CD8-positive, alpha-beta T cell (primary cell): ENCODE measurements at regions of chr6 and their contacts with region 1.

Region 1: DNA sequence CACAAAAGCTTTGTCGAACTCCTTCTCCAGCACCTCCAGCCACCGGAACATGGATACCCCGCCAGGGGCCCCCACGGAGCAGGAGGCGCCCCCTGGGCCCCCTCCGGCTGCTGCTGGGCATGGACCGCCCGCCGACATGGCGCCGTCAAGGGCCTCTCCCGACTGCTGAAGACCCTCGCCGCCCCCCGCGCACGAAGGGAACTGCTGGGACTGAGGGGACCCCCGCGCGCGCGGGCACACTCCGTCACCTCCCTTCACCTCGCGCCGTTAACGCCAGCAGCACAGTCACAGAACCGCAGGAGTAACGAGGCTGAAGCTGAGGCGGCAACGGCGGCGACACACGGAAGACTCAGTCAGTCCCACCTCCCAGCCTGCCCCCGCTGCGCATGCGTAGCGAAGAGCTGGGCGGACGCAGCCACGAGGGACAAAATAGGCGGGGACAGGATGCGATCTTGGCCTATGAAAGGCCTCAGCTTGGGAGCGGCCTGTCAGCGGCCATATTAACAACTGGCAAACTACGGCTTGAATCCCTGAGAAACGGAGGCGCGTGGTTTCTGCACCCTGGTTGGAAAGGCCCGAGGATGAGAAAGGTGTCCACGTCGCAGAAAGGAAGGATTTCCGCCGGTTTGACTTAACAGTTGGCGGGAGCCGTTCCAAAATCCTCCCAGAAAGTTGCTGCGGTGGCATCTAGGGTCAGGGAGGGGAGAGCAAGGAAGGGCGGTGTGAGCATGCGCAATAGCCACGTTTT is at the start of gene GOPC:
- DNase-seq: peak; percentile 88 to 99 (median 93)
- ATAC-seq: peak; percentile 94
- H3K4me3 ChIP-seq: peak within 1 kb of the TSS; percentile 76 to 86
- H3K4me3 Mint-ChIP-seq: peak within 1 kb of the TSS; percentile 100
- H3K27ac ChIP-seq: peak within 1 kb of the TSS; percentile 79 to 85
- H3K27ac Mint-ChIP-seq: peak within 1 kb of the TSS; percentile 99
- H3K4me1 ChIP-seq: peaks cover 16% of the 10 kb centered on the region
- H3K4me1 Mint-ChIP-seq: peaks cover 46% of the 10 kb centered on the region
- H3K27me3 ChIP-seq: no peaks in the 10 kb centered on the region
- H3K27me3 Mint-ChIP-seq: no peaks in the 10 kb centered on the region
- CTCF ChIP-seq: no peak
- total RNA-seq, gene GOPC: 7.5 to 8.1 TPM

Region 2: DNA sequence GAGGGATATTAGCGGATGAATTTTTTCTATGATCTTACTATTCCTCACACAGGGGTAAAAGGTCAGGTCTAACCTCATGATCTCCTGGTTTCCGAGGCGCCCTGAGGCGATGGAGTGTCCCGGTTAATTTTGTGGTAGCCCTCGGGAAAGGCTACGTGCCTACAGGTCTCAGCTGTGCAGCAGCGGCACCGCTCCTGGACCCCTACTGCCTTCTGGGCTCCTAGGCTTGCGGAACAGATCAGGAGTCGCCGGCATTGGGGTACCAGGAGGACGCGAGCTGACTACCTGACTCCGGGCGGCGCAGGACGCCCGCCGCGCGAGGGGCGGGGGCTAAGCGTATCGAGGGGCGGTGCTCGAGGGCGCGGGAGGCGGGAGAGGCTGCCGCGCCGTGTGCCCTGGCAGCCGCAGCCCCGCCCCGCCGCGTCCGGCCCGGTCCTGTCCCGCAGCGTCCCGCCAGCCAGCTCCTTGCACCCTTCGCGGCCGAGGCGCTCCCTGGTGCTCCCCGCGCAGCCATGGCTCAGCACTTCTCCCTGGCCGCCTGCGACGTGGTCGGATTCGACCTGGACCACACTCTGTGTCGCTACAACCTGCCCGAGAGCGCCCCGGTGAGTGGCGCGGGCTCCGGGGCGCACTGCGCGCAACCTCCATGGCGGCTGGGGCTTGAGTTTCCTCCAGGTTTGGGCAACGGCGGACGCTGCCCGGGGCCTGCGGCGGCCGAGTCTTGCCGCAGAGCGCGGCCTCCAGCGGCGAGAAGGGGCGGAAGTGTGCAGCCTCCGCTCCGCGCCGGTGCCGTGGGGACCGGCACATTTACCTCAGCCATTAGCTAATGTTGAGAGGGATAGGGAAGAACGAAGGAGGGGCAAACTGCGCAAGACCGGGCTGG is 1501.7 kb before region 1 on chr6 and contains the start of gene NT5DC1:
- CTCF ChIA-PET with region 1: no interaction called
- POLR2A ChIA-PET with region 1: no interaction called
- intact Hi-C with region 1: loop called (anchors 5 to 10 kb)
- DNase-seq: peak; percentile 67 to 91 (median 83)
- ATAC-seq: peak; percentile 93
- H3K4me3 ChIP-seq: peak within 1 kb of the TSS; percentile 74 to 87
- H3K4me3 Mint-ChIP-seq: peak within 1 kb of the TSS; percentile 93
- H3K27ac ChIP-seq: peak within 1 kb of the TSS; percentile 76 to 83
- H3K27ac Mint-ChIP-seq: peak within 1 kb of the TSS; percentile 90
- H3K4me1 ChIP-seq: peaks cover 46% of the 10 kb centered on the region
- H3K4me1 Mint-ChIP-seq: peaks cover 54% of the 10 kb centered on the region
- H3K27me3 ChIP-seq: no peaks in the 10 kb centered on the region
- H3K27me3 Mint-ChIP-seq: no peaks in the 10 kb centered on the region
- CTCF ChIP-seq: peak; percentile 55
- total RNA-seq, gene NT5DC1: 19.2 to 23.3 TPM

Region 3: GRCh38 chr6:117346142-117346930 is 256.0 kb before region 1 on chr6:
- CTCF ChIA-PET with region 1: interaction called, 16 read pairs
- POLR2A ChIA-PET with region 1: no interaction called
- intact Hi-C with region 1: loop called (anchors 1 to 2 kb)
- DNase-seq: peak in 2 of 9 experiments; percentile 14 to 36
- ATAC-seq: no peak
- H3K4me3 ChIP-seq: no peak overlapping the region
- H3K4me3 Mint-ChIP-seq: no peak overlapping the region
- H3K27ac ChIP-seq: no peak overlapping the region
- H3K27ac Mint-ChIP-seq: no peak overlapping the region
- H3K4me1 ChIP-seq: no peaks in the 10 kb centered on the region
- H3K4me1 Mint-ChIP-seq: no peaks in the 10 kb centered on the region
- H3K27me3 ChIP-seq: no peaks in the 10 kb centered on the region
- H3K27me3 Mint-ChIP-seq: peaks cover 11% of the 10 kb centered on the region
- CTCF ChIP-seq: peak; percentile 72

Region 4: DNA sequence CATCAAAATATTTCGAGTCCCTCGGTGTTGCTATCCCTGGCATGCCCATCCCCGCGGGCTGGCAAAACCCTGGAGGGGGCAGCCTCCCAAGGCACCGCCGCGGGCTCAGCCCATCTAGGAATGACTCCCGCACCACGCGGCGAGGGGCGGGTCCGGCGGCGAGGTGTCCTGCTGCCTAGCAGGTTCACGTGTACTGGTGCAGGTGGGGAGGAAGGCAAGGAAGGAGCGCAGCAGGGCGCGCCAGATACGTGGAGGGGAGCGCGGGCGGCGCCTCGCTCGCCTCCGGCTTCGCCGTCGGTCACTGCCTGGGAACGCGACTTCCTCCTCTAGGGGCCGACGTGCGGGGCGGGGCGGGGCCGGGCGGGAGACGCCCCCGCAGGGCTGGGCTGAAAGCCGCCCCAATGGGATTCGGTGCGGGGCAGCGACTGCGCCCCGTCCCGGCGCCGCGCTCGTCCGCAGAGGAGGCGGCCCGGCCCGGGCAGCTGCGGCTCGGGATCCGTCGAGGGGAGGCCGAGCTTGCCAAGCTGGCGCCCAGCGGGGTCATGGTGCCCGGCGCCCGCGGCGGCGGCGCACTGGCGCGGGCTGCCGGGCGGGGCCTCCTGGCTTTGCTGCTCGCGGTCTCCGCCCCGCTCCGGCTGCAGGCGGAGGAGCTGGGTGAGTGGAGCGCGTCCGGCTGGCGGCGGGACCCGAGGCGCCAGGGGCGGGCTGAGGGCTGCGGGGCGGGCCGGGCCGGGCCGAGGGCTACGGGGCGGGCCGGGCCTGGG is 119.9 kb before region 1 on chr6 and contains the start of gene DCBLD1:
- CTCF ChIA-PET with region 1: interaction called, 12 read pairs
- POLR2A ChIA-PET with region 1: interaction called, 3 read pairs
- intact Hi-C with region 1: loop called in 1 of 2 experiments (anchors 1 kb)
- DNase-seq: peak in 8 of 9 experiments; percentile 21 to 75 (median 47)
- ATAC-seq: peak; percentile 66
- H3K4me3 ChIP-seq: peak within 1 kb of the TSS; percentile 72 to 74
- H3K4me3 Mint-ChIP-seq: peak within 1 kb of the TSS; percentile 90
- H3K27ac ChIP-seq: no peak within 1 kb of the TSS
- H3K27ac Mint-ChIP-seq: peak within 1 kb of the TSS; percentile 47
- H3K4me1 ChIP-seq: peaks cover 16% of the 10 kb centered on the region
- H3K4me1 Mint-ChIP-seq: peaks cover 17% of the 10 kb centered on the region
- H3K27me3 ChIP-seq: no peaks in the 10 kb centered on the region
- H3K27me3 Mint-ChIP-seq: peaks cover 31% of the 10 kb centered on the region
- CTCF ChIP-seq: no peak
- total RNA-seq, gene DCBLD1: 2.0 to 2.1 TPM

Region 5: GRCh38 chr6:117674991-117675657 is 72.8 kb after region 1 on chr6 and contains the start of gene NUS1:
- CTCF ChIA-PET with region 1: no interaction called
- POLR2A ChIA-PET with region 1: interaction called, 3 read pairs
- intact Hi-C with region 1: loop called (anchors 1 to 2 kb)
- DNase-seq: peak; percentile 98 to 99 (median 98)
- ATAC-seq: peak; percentile 96
- H3K4me3 ChIP-seq: peak within 1 kb of the TSS; percentile 75 to 79
- H3K4me3 Mint-ChIP-seq: peak within 1 kb of the TSS; percentile 91
- H3K27ac ChIP-seq: peak within 1 kb of the TSS; percentile 60 to 87
- H3K27ac Mint-ChIP-seq: peak within 1 kb of the TSS; percentile 94
- H3K4me1 ChIP-seq: peaks cover 38% of the 10 kb centered on the region
- H3K4me1 Mint-ChIP-seq: peaks cover 50% of the 10 kb centered on the region
- H3K27me3 ChIP-seq: no peaks in the 10 kb centered on the region
- H3K27me3 Mint-ChIP-seq: no peaks in the 10 kb centered on the region
- CTCF ChIP-seq: peak; percentile 67
- total RNA-seq, gene NUS1: 28.3 to 29.0 TPM

Region 6: DNA sequence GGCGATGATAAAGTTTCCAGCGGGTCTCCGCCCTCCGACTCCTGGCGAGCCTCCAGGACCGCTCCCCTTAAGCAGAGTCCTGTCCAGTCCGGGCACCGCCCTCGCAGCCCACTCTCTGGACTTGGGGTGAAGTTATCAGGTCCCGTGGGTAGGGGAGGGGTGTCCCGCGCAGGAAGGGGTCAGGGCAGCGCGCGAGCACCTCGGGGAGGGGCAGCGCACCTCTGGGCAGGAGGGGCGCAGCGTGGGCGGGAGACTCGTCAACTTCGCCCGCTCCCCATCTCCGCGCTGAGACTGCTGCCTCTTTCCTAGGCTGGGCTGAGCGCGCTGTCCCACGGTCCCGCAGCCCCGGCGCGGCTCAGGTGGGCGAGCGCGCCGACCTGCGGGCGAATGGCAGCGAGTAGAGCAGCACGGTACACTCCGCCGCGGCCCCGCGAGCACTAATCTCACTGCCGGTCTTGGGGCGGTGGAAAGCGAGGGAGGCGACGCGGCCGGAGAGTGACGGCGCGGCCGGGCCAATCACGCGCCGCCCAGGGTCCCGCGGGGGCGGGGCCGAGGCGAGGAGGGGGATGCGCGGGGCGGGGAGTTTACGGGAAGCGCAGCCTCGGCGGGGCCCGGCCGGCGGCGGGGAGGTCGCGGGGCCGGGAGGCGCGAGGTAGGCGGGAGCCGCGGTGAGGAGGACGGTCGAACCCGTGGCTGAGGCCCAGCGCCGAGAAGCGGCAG is 1747.2 kb after region 1 on chr6 and contains the start of gene MAN1A1:
- CTCF ChIA-PET with region 1: no interaction called
- POLR2A ChIA-PET with region 1: no interaction called
- intact Hi-C with region 1: loop called in 1 of 2 experiments (anchors 10 kb)
- DNase-seq: peak; percentile 79 to 94 (median 88)
- ATAC-seq: peak; percentile 86
- H3K4me3 ChIP-seq: peak within 1 kb of the TSS; percentile 91 to 92
- H3K4me3 Mint-ChIP-seq: peak within 1 kb of the TSS; percentile 90
- H3K27ac ChIP-seq: peak within 1 kb of the TSS; percentile 65 to 67
- H3K27ac Mint-ChIP-seq: peak within 1 kb of the TSS; percentile 88
- H3K4me1 ChIP-seq: peaks cover 30% of the 10 kb centered on the region
- H3K4me1 Mint-ChIP-seq: peaks cover 45% of the 10 kb centered on the region
- H3K27me3 ChIP-seq: no peaks in the 10 kb centered on the region
- H3K27me3 Mint-ChIP-seq: no peaks in the 10 kb centered on the region
- CTCF ChIP-seq: no peak
- total RNA-seq, gene MAN1A1: 8.4 to 8.5 TPM